PC-3 (cell line): ENCODE measurements at regions of chr7 and their contacts with region 1.

Region 1: DNA sequence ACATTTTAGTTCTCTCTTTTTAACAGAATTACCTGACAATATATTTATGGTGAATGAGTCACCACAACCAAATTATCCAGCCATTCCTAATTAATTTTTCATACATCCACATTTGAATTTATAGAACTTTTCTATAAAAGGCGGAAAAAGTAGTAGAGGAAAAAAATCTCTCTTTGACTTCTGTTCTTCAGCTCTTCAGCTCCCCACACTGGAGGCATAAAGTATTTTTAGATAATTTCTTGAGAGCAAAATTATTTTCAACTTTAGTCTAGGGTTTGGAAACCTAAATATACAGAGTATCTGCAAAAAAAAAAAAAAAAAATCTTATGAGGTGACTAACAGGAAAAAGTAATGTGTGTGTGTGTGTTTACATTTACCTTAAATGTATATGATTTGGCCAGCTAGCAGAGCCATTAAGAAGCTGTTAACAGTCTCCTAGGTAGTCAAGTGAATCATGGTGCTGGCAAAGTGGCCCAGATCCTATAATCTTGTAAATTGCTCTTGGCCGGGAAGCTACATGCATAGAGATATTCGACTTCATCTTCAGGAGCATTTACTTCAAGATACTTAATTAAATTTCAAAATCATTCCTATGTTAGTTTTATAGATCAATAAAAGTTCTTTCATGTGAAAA is 383.1 kb upstream of the STEAP1 start:
- DNase-seq: peak; percentile 25
- ATAC-seq: peak; percentile 85
- H3K4me3 ChIP-seq: no peak overlapping the region
- H3K27ac ChIP-seq: no peak overlapping the region
- H3K4me1 ChIP-seq: peaks cover 14% of the 10 kb centered on the region; the same call in 1 of the 2 replicates
- H3K27me3 ChIP-seq: no peaks in the 10 kb centered on the region
- CTCF ChIP-seq: peak; percentile 48; the same call in 1 of the 2 replicates

Region 2: DNA sequence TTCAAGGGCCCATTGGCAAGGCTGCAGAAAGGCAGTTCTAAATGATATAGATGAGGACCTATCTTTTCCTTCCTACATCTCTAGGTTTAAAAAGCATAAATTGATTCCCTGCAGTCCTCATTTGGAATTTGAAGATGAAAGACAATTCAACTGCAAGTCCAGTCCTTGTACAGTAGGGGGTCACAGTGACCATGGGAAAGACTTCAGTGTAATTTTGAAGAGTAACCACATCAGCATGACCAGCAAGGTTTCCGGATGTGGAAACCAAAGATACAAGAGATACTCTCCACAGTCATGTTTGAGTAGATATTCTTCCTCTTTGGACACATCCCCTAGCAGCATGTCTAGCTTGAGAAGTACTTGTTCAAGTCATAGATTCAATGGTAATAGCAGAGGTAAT is 436.3 kb before region 1 on chr7:
- CTCF ChIA-PET with region 1: no interaction called
- POLR2A ChIA-PET with region 1: no interaction called
- intact Hi-C with region 1: loop called (anchors 5 kb)
- DNase-seq: peak; percentile 3
- ATAC-seq: no peak
- H3K4me3 ChIP-seq: no peak overlapping the region
- H3K27ac ChIP-seq: no peak overlapping the region
- H3K4me1 ChIP-seq: no peaks in the 10 kb centered on the region
- H3K27me3 ChIP-seq: no peaks in the 10 kb centered on the region
- CTCF ChIP-seq: no peak

Region 3: DNA sequence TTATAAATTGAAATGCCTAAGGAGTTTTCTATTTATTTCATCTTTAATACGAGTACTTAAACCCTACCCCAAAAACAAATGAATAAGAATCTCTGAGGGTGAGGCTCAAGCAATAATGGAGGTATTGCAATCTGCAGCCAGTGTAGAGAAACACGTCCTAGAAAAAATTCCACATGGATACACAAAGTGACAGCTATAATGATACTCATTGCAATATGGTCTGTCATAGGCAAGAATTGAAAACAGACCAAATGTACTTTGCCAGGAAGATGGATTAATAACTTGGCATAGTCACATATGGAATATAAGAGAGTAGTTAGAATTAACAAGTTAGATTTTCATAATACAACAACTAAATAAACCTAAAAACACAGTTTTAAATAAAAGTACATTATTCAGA is 57.0 kb before region 1 on chr7:
- CTCF ChIA-PET with region 1: no interaction called
- POLR2A ChIA-PET with region 1: no interaction called
- intact Hi-C with region 1: no loop called
- DNase-seq: no peak
- ATAC-seq: no peak
- H3K4me3 ChIP-seq: no peak overlapping the region
- H3K27ac ChIP-seq: no peak overlapping the region
- H3K4me1 ChIP-seq: no peaks in the 10 kb centered on the region
- H3K27me3 ChIP-seq: no peaks in the 10 kb centered on the region
- CTCF ChIP-seq: no peak

Region 4: DNA sequence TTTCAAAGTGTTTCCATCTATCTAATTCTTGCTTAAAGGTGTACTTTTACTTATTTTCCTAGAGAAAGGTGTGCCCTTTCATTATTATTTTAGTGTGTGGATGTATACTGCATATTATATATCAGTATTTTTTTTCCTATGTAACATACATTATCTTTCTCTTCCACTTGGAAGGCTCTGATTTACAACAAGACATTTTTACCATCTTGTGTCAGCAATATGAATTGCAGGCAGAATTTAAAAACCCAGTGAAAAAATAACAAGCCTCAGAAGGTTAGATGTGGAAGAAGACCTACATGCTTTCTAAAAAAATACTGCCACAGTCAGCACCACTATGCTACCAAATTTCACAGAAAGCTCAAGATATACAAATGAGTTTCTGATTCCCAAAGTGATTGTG is 55.4 kb after region 1 on chr7:
- CTCF ChIA-PET with region 1: no interaction called
- POLR2A ChIA-PET with region 1: no interaction called
- intact Hi-C with region 1: loop called (anchors 1 kb)
- DNase-seq: no peak
- ATAC-seq: 0 out of 2 replicates have a peak, but pooled peaks have one; percentile 29
- H3K4me3 ChIP-seq: no peak overlapping the region
- H3K27ac ChIP-seq: no peak overlapping the region
- H3K4me1 ChIP-seq: no peaks in the 10 kb centered on the region
- H3K27me3 ChIP-seq: no peaks in the 10 kb centered on the region
- CTCF ChIP-seq: no peak

Region 5: DNA sequence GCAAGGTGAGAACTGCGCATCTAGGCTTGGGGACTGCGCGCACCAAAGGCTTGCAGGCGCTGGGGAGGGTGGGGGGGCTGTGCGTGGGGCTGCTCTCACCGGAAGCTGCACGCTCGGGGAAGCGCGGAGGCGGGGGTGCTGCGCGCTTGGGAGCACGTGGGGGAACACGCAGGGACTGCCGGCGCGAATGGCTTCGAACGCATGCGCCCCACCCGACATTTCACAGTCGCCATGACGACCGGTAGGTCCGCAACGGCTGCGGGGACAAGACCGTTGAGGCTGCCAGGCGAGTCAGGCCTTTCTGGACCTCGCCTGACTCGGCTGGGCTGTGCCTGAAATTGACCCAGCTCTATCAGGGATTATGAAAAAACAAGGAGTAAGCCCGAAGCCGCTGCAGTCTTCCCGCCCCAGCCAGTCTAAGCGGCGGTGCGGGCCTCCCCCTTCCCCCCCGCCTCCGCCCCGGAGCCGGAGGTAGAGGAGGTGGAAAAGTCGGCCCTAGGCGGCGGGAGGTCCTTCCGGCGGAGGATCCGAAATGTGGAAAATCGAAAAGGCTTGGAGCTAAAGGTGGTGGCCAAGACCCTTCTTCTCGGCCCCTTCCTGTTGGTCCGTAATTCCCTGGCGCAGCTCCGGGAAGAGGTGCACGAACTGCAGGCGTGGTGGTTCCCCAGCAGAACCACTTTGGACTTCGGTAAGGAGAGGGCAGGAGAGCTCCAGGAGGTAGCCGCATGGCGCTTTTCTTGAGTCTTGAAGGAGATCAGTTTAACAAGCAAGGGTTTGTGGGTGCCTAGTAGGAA is 348.3 kb after region 1 on chr7:
- CTCF ChIA-PET with region 1: no interaction called
- POLR2A ChIA-PET with region 1: no interaction called
- intact Hi-C with region 1: loop called (anchors 5 kb)
- DNase-seq: no peak
- ATAC-seq: peak; percentile 70
- H3K4me3 ChIP-seq: peak overlapping the region; percentile 30
- H3K27ac ChIP-seq: no peak overlapping the region
- H3K4me1 ChIP-seq: no peaks in the 10 kb centered on the region
- H3K27me3 ChIP-seq: peaks cover 21% of the 10 kb centered on the region
- CTCF ChIP-seq: no peak